ENCODE measurements at regions of chr13 and their contacts with region 1.

Region 1: DNA sequence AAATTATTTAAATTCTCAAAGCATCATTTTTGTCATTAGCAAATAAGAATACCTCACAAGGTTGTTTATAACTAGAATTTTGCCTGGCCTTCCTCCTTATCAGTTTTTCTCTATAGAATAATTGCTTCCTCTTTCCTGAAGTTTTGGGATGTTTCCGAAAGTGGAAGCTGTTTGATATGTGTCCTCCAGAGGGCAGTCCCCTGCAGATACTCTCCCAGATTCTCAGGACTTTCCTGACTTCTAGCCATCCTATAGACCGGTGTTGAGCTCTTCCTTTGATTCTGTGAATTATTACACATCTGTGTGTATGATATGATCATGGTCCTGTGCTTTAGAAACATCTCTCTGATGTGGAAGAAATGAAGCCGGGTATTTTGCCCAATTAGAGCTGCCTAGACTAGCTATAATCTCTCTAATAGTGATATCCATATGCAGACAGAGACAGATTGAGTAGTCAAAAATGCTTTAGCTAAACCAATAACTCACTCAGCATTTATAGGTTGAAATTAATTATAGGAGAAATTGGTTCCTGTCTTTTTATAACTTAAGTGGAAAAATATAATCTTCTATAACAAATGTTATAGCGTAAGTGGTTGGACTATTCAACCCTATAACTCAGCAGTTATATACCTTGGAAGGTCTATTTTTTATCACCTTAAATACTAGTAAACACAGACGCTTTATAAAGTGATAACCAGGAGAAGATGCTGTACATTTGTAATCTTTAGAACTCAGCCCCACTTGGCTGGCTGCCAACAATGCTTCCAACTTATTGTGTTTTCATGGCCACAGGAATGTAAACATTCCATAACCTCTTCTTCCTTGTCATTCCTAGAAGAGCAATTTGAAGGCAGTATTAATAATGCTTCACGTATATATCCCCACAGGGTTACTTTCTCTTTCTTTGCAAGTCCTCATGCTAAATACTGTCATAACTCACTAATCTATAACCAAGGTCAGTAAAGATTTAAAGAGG is 201.0 kb upstream of the RXFP2 start:
- DNase-seq: peak; percentile 79
- H3K4me3 ChIP-seq: no peak overlapping the region
- H3K27ac ChIP-seq: no peak overlapping the region
- H3K4me1 ChIP-seq: 0 out of 2 replicates have a peak, but pooled peaks cover 7% of the 10 kb centered on the region
- H3K27me3 ChIP-seq: no peaks in the 10 kb centered on the region

Region 2: GRCh38 chr13:31722673-31723072 is 184.3 kb after region 1 on chr13:
- in situ Hi-C with region 1: no loop called
- DNase-seq: no peak
- H3K4me3 ChIP-seq: no peak overlapping the region
- H3K27ac ChIP-seq: no peak overlapping the region
- H3K4me1 ChIP-seq: 0 out of 2 replicates have a peak, but pooled peaks cover 5% of the 10 kb centered on the region
- H3K27me3 ChIP-seq: no peaks in the 10 kb centered on the region; the same call in 1 of the 2 replicates

Region 3: DNA sequence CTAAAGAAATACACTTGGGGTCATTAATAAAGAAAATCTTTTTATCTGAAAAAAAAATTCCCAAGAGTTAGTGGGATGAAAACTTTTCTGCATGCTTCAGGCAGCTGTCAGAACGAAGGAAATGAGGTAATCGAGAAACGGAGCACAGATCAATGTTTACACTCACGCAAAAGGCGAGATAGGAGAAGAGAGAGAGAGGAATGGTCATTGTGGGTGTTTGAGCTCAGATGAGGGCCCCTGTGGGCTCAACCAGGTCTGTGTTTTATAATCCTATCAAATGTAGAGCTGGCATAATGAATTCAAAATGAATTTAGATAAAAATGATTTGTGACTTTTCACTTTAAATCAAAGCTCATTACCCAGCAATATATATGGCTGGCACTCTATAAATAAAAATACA is 194.7 kb after region 1 on chr13:
- in situ Hi-C with region 1: loop called (anchors 10 kb)
- DNase-seq: no peak
- H3K4me3 ChIP-seq: no peak overlapping the region
- H3K27ac ChIP-seq: no peak overlapping the region
- H3K4me1 ChIP-seq: no peaks in the 10 kb centered on the region
- H3K27me3 ChIP-seq: no peaks in the 10 kb centered on the region

Region 4: GRCh38 chr13:31797154-31797775 is 258.9 kb after region 1 on chr13:
- in situ Hi-C with region 1: loop called (anchors 10 kb)
- DNase-seq: peak; percentile 76
- H3K4me3 ChIP-seq: no peak overlapping the region
- H3K27ac ChIP-seq: no peak overlapping the region
- H3K4me1 ChIP-seq: peaks cover 20% of the 10 kb centered on the region
- H3K27me3 ChIP-seq: no peaks in the 10 kb centered on the region